ENCODE measurements at regions of chr1 and their contacts with region 1.

Region 1: GRCh38 chr1:65958561-65959350 is 166.1 kb downstream of the PDE4B start:
- DNase-seq: peak; percentile 30 to 59 (median 40)
- H3K4me3 ChIP-seq: no peak overlapping the region
- H3K4me3 Mint-ChIP-seq: no peak overlapping the region
- H3K27ac ChIP-seq: no peak overlapping the region
- H3K27ac Mint-ChIP-seq: no peak overlapping the region
- H3K4me1 ChIP-seq: no peaks in the 10 kb centered on the region
- H3K4me1 Mint-ChIP-seq: peaks cover 13% of the 10 kb centered on the region
- H3K27me3 ChIP-seq: no peaks in the 10 kb centered on the region
- H3K27me3 Mint-ChIP-seq: peaks cover 0 to 2% (median 0%) of the 10 kb centered on the region in 3 donors
- CTCF ChIP-seq: peak; percentile 80

Region 2: GRCh38 chr1:66242646-66243547 is 284.1 kb after region 1 on chr1:
- intact Hi-C with region 1: loop called (anchors 2 to 5 kb)
- DNase-seq: peak; percentile 53 to 76 (median 66)
- H3K4me3 ChIP-seq: no peak overlapping the region
- H3K4me3 Mint-ChIP-seq: no peak overlapping the region
- H3K27ac ChIP-seq: no peak overlapping the region
- H3K27ac Mint-ChIP-seq: no peak overlapping the region
- H3K4me1 ChIP-seq: no peaks in the 10 kb centered on the region
- H3K4me1 Mint-ChIP-seq: no peaks in the 10 kb centered on the region
- H3K27me3 ChIP-seq: no peaks in the 10 kb centered on the region
- H3K27me3 Mint-ChIP-seq: peaks cover 0 to 1% (median 0%) of the 10 kb centered on the region in 3 donors
- CTCF ChIP-seq: peak; percentile 96